Common myeloid progenitor, CD34-positive (primary cell): ENCODE measurements at regions of chr13 and their contacts with region 1.

Region 1: GRCh38 chr13:110715395-110716235 is 2.1 kb downstream of the ING1 start:
- DNase-seq: peak; percentile 99 to 100 (median 100)
- H3K4me3 ChIP-seq: peak overlapping the region; percentile 84 to 96 (median 94)
- H3K27ac ChIP-seq: peak overlapping the region; percentile 64 to 98
- H3K4me1 ChIP-seq: peaks cover 11 to 29% (median 25%) of the 10 kb centered on the region in 4 experiments
- H3K27me3 ChIP-seq: no peaks in the 10 kb centered on the region

Region 2: GRCh38 chr13:110680851-110681250 is 34.8 kb before region 1 on chr13:
- CTCF ChIA-PET with region 1: interaction called, 10 read pairs
- POLR2A ChIA-PET with region 1: interaction called, 6 read pairs
- DNase-seq: peak in 2 of 3 donors; percentile 31 to 38
- H3K4me3 ChIP-seq: no peak overlapping the region
- H3K27ac ChIP-seq: no peak overlapping the region
- H3K4me1 ChIP-seq: no peaks in the 10 kb centered on the region
- H3K27me3 ChIP-seq: no peaks in the 10 kb centered on the region

Region 3: GRCh38 chr13:110971486-110971885 is 255.9 kb after region 1 on chr13:
- CTCF ChIA-PET with region 1: no interaction called
- POLR2A ChIA-PET with region 1: no interaction called
- DNase-seq: no peak
- H3K4me3 ChIP-seq: no peak overlapping the region
- H3K27ac ChIP-seq: no peak overlapping the region
- H3K4me1 ChIP-seq: no peaks in the 10 kb centered on the region
- H3K27me3 ChIP-seq: peaks cover 0 to 7% (median 0%) of the 10 kb centered on the region in 5 experiments